CD4-positive, alpha-beta memory T cell (primary cell): ENCODE measurements at regions of chr2 and their contacts with region 1.

Region 1: GRCh38 chr2:45935791-45936622 is 284.5 kb downstream of the PRKCE start:
- DNase-seq: peak in 3 of 5 donors; percentile 1 to 17 (median 9)
- H3K4me3 ChIP-seq: no peak overlapping the region
- H3K4me3 Mint-ChIP-seq: peak overlapping the region in 1 of 8 donors; percentile 45
- H3K27ac ChIP-seq: no peak overlapping the region
- H3K27ac Mint-ChIP-seq: no peak overlapping the region
- H3K4me1 ChIP-seq: no peaks in the 10 kb centered on the region
- H3K4me1 Mint-ChIP-seq: peaks cover 0 to 8% (median under 1%) of the 10 kb centered on the region in 4 donors
- H3K27me3 ChIP-seq: no peaks in the 10 kb centered on the region
- H3K27me3 Mint-ChIP-seq: no peaks in the 10 kb centered on the region

Region 2: DNA sequence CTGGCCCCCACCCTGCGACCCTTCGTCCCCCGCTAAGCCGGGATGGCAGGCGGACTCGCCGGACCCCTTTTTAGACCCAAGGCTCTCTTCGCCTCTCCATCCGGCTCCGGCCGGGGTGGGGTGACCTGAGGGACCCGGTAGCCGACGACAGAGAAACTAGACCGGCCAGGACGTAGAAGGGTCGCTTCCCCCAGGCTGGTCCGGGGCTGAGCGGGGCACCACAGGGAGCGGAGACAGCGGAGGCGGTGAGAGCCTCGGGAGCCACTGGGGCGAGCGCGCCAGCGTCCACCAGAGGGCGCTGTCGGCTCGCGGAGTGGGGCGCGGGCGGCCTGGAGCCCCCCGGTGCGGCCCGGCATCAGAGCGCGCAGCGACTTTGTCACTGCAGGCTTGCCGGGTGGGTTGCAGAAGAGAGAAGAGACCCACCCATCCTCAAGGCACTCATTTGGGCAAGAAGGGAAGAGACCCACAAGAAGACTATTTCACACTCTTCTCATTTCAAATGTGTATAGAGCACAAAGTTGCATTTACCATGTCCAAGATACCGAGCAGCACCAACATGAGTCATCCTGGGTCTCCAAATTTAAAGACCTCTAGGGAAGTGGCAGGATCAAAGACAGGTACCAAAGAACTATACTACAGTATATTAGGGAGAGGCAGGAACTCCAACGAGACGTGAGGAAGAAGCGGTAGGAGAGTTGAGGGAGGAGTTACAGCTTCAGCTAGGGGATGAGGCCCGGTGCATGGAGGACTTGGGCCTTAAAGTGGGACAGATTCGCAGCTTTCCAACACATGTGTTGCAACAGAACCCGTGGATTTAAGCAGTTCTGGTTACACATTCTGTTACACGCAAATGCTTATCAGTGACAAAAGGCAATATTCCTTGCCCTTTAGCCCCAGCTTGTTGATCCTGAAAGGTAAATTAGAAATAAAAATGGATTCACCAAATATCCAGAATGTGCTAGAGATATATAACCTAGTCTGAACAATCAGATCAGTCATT is 292.2 kb before region 1 on chr2:
- CTCF ChIA-PET with region 1: interaction called, 5 read pairs
- POLR2A ChIA-PET with region 1: no interaction called
- intact Hi-C with region 1: loop called (anchors 1 kb)
- DNase-seq: peak; percentile 47 to 76 (median 68)
- H3K4me3 ChIP-seq: peak overlapping the region in 1 of 2 donors; percentile 39
- H3K4me3 Mint-ChIP-seq: peak overlapping the region in 6 of 8 donors; percentile 12 to 69 (median 41)
- H3K27ac ChIP-seq: no peak overlapping the region
- H3K27ac Mint-ChIP-seq: peak overlapping the region in 2 of 7 donors; percentile 24 to 71
- H3K4me1 ChIP-seq: peaks cover 9% of the 10 kb centered on the region
- H3K4me1 Mint-ChIP-seq: peaks cover 0 to 8% (median 2%) of the 10 kb centered on the region in 4 donors
- H3K27me3 ChIP-seq: peaks cover 8% of the 10 kb centered on the region
- H3K27me3 Mint-ChIP-seq: peaks cover 16 to 18% of the 10 kb centered on the region in 2 donors

Region 3: DNA sequence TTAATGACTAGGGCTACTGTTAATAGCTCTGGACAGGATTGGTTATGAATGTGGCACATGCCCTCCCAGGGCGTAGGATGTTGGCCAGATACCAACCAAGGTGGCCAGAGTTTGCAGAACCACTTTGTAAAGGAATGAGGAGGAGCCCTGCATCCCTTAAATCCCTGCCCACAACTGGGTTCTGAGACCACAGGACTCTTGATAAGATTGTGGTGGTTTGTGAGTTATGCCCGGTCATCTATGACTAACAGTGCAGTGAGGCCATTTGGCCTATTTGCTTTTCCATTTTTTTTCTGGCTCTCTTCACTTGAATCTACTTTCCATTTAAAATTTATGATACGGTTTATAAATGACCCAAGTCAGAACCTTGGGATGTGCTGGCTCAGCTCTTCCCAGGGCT is 10.0 kb after region 1 on chr2:
- CTCF ChIA-PET with region 1: no interaction called
- POLR2A ChIA-PET with region 1: no interaction called
- intact Hi-C with region 1: no loop called
- DNase-seq: no peak
- H3K4me3 ChIP-seq: no peak overlapping the region
- H3K4me3 Mint-ChIP-seq: no peak overlapping the region
- H3K27ac ChIP-seq: no peak overlapping the region
- H3K27ac Mint-ChIP-seq: no peak overlapping the region
- H3K4me1 ChIP-seq: no peaks in the 10 kb centered on the region
- H3K4me1 Mint-ChIP-seq: peaks cover 0 to 3% (median 0%) of the 10 kb centered on the region in 4 donors
- H3K27me3 ChIP-seq: no peaks in the 10 kb centered on the region
- H3K27me3 Mint-ChIP-seq: peaks cover 0 to 2% of the 10 kb centered on the region in 2 donors